ENCODE measurements at regions of chr12 and their contacts with region 1.

Region 1: DNA sequence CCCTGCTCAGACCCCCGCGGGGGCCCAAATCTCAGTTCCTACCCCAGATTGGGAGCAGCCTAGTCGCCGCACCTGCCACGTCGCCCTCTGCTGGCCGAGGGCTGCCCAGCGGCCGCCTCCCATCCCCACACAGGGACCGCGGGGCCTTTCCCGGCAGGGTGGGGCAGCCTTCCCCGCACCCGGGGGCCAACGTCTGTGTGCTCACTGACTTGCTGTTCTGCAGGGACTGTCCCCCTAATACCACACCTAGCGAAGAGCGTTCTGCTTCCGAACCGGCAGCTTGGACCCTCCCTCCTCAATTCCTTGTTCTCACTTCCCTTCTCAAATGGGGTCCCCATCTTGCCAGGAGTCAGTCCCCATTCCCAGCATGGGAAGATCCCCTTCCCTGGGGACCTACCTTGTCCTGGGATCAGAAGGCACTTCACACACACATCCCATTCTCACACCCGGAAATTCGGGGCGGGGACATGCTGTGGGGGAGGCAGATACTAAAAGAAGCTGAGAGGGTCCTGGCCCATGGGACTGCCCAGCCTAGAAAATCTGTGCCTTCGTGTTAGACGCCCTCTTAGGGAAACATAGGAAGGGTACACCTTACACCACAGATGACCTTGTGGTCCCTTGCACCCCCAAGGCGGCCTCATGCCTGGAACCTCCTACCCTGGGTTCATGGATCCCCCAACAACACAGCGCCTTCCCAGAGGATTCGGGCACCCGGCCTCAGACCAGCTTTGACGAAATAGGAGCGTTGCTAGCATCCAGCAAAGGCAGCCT is 16.4 kb downstream of the ACVRL1 start:
- DNase-seq: peak; percentile 73
- ATAC-seq: peak; percentile 89
- H3K4me3 Mint-ChIP-seq: no peak overlapping the region
- H3K27ac Mint-ChIP-seq: no peak overlapping the region
- H3K4me1 Mint-ChIP-seq: peaks cover 6% of the 10 kb centered on the region
- H3K27me3 Mint-ChIP-seq: no peaks in the 10 kb centered on the region
- CTCF ChIP-seq: peak; percentile 91

Region 2: DNA sequence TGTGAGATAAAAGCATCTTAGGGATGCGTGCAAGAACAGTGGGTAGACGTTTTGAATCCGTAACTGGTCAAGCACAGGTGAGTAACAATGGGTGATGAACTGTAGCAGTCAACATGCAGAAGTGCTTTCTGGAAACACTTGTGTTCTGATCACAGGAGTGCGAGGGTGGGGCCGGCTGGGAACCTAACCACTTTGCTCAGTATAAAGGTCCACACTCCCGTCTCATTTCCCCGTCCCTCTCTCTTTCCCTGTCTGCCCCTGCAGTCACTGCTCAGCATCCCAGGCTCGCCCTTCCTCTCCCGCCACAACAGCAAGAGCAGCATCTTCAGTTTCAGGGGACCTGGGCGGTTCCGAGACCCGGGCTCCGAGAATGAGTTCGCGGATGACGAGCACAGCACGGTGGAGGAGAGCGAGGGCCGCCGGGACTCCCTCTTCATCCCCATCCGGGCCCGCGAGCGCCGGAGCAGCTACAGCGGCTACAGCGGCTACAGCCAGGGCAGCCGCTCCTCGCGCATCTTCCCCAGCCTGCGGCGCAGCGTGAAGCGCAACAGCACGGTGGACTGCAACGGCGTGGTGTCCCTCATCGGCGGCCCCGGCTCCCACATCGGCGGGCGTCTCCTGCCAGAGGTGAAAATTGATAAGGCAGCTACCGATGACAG is 202.3 kb before region 1 on chr12:
- CTCF ChIA-PET with region 1: no interaction called
- POLR2A ChIA-PET with region 1: no interaction called
- intact Hi-C with region 1: no loop called
- DNase-seq: peak; percentile 72
- ATAC-seq: peak; percentile 96
- H3K4me3 Mint-ChIP-seq: peak overlapping the region; percentile 59
- H3K27ac Mint-ChIP-seq: no peak overlapping the region
- H3K4me1 Mint-ChIP-seq: peaks cover 11% of the 10 kb centered on the region
- H3K27me3 Mint-ChIP-seq: peaks cover 19% of the 10 kb centered on the region
- CTCF ChIP-seq: peak; percentile 20

Region 3: GRCh38 chr12:51836041-51836826 is 87.5 kb before region 1 on chr12:
- CTCF ChIA-PET with region 1: no interaction called
- POLR2A ChIA-PET with region 1: no interaction called
- intact Hi-C with region 1: no loop called
- DNase-seq: no peak
- ATAC-seq: no peak
- H3K4me3 Mint-ChIP-seq: no peak overlapping the region
- H3K27ac Mint-ChIP-seq: no peak overlapping the region
- H3K4me1 Mint-ChIP-seq: peaks cover 9% of the 10 kb centered on the region
- H3K27me3 Mint-ChIP-seq: peaks cover 27% of the 10 kb centered on the region
- CTCF ChIP-seq: no peak

Region 4: GRCh38 chr12:51911788-51912711 is 11.6 kb before region 1 on chr12:
- CTCF ChIA-PET with region 1: interaction called, 16 read pairs
- POLR2A ChIA-PET with region 1: no interaction called
- intact Hi-C with region 1: no loop called
- DNase-seq: no peak
- ATAC-seq: no peak
- H3K4me3 Mint-ChIP-seq: no peak overlapping the region
- H3K27ac Mint-ChIP-seq: no peak overlapping the region
- H3K4me1 Mint-ChIP-seq: no peaks in the 10 kb centered on the region
- H3K27me3 Mint-ChIP-seq: peaks cover 15% of the 10 kb centered on the region
- CTCF ChIP-seq: no peak

Region 5: GRCh38 chr12:51934080-51934479 is 10.4 kb after region 1 on chr12:
- CTCF ChIA-PET with region 1: interaction called, 16 read pairs
- POLR2A ChIA-PET with region 1: interaction called, 3 read pairs
- intact Hi-C with region 1: no loop called
- DNase-seq: no peak
- ATAC-seq: no peak
- H3K4me3 Mint-ChIP-seq: no peak overlapping the region
- H3K27ac Mint-ChIP-seq: no peak overlapping the region
- H3K4me1 Mint-ChIP-seq: no peaks in the 10 kb centered on the region
- H3K27me3 Mint-ChIP-seq: no peaks in the 10 kb centered on the region
- CTCF ChIP-seq: no peak

Region 6: DNA sequence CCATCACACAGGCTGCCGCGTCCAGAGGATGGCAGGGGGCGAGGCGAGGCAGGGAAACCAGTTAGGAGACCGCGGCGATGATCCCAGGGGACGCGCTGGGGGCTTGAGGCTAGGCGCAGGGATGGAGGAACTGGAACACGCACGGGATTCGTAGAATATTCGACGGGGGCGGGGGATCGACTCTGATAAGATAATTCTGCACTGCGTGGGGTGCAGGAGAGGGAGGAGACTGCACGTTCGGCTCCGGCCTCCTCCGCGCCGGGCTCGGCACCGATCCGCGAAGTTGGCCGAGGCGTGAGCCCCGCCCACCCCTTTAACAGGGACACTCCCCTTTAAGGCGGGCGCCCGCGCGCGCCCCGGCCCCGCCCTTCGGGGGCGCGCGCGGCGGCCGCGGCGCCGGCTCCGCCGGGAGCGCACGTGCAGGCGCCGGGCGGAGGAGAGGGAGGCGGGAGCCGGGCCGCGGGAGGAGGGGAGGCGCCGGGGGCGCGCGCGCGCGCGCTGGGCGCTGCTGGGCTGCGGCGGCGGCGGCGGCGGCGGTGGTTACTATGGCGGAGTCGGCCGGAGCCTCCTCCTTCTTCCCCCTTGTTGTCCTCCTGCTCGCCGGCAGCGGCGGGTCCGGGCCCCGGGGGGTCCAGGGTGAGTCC is 27.6 kb after region 1 on chr12 and contains the start of gene ACVR1B:
- CTCF ChIA-PET with region 1: interaction called, 15 read pairs
- POLR2A ChIA-PET with region 1: no interaction called
- intact Hi-C with region 1: no loop called
- DNase-seq: peak; percentile 92
- ATAC-seq: peak; percentile 97
- H3K4me3 Mint-ChIP-seq: peak within 1 kb of the TSS; percentile 86
- H3K27ac Mint-ChIP-seq: peak within 1 kb of the TSS; percentile 69
- H3K4me1 Mint-ChIP-seq: peaks cover 35% of the 10 kb centered on the region
- H3K27me3 Mint-ChIP-seq: peaks cover 8% of the 10 kb centered on the region
- CTCF ChIP-seq: no peak
- total RNA-seq, gene ACVR1B: 7.5 to 8.6 TPM

Region 7: GRCh38 chr12:51970904-51971646 is 47.4 kb after region 1 on chr12:
- CTCF ChIA-PET with region 1: interaction called, 12 read pairs
- POLR2A ChIA-PET with region 1: no interaction called
- intact Hi-C with region 1: no loop called
- DNase-seq: peak; percentile 75
- ATAC-seq: peak; percentile 83
- H3K4me3 Mint-ChIP-seq: peak overlapping the region; percentile 29
- H3K27ac Mint-ChIP-seq: peak overlapping the region; percentile 62
- H3K4me1 Mint-ChIP-seq: peaks cover 61% of the 10 kb centered on the region
- H3K27me3 Mint-ChIP-seq: no peaks in the 10 kb centered on the region
- CTCF ChIP-seq: peak; percentile 87

Region 8: GRCh38 chr12:51980051-51980808 is 56.5 kb after region 1 on chr12:
- CTCF ChIA-PET with region 1: interaction called, 46 read pairs
- POLR2A ChIA-PET with region 1: no interaction called
- intact Hi-C with region 1: loop called (anchors 1 kb)
- DNase-seq: peak; percentile 81
- ATAC-seq: peak; percentile 99
- H3K4me3 Mint-ChIP-seq: no peak overlapping the region
- H3K27ac Mint-ChIP-seq: peak overlapping the region; percentile 68
- H3K4me1 Mint-ChIP-seq: peaks cover 28% of the 10 kb centered on the region
- H3K27me3 Mint-ChIP-seq: no peaks in the 10 kb centered on the region
- CTCF ChIP-seq: peak; percentile 97